Activated CD4-positive, alpha-beta T cell treated with anti-CD3 and anti-CD28 coated beads for 36 hours (primary cell): ENCODE measurements at regions of chr9 and their contacts with region 1.

Region 1: DNA sequence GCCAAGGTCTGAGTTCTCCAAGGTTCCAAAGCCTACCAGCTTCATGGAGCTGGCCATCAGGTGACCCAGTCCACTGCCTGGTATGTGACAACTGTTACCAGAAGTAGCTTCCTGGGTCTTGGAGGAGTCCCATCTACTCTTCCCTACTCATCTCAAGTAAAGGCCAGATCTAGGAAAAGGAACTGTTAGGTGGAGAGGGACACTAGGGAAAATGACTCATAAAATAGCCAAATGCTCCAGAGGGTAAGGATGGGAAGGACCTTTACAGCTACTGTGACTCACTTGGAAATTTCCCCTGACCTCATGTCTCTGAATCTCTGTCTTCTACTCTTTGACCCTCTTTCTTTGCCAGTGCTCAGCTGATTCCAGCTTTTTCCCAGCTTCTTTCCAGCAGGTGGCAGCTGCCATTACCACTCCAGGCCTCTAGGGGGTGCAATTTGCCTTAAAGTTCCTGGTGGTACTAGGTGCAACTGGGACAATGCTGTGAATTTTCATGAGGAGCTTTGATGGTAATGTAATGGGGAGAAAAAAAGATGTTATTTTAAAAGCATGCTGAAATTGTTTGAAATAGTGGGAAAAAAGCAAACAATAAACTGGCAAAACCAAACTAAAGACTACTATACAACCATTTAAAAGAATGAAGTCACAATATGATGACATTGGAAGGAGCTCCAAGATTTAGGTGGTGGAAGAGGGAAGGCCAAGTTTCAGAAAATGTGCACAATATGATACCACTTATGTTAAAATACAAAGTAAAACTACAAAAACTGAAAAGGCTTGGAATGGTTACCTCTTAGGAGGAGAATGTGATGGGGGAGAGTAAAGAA is 27.1 kb upstream of the MYORG start:
- DNase-seq: peak; percentile 76
- ATAC-seq: peak; percentile 16
- H3K4me3 Mint-ChIP-seq: no peak overlapping the region
- H3K27ac Mint-ChIP-seq: no peak overlapping the region
- H3K4me1 Mint-ChIP-seq: no peaks in the 10 kb centered on the region
- H3K27me3 Mint-ChIP-seq: no peaks in the 10 kb centered on the region

Region 2: DNA sequence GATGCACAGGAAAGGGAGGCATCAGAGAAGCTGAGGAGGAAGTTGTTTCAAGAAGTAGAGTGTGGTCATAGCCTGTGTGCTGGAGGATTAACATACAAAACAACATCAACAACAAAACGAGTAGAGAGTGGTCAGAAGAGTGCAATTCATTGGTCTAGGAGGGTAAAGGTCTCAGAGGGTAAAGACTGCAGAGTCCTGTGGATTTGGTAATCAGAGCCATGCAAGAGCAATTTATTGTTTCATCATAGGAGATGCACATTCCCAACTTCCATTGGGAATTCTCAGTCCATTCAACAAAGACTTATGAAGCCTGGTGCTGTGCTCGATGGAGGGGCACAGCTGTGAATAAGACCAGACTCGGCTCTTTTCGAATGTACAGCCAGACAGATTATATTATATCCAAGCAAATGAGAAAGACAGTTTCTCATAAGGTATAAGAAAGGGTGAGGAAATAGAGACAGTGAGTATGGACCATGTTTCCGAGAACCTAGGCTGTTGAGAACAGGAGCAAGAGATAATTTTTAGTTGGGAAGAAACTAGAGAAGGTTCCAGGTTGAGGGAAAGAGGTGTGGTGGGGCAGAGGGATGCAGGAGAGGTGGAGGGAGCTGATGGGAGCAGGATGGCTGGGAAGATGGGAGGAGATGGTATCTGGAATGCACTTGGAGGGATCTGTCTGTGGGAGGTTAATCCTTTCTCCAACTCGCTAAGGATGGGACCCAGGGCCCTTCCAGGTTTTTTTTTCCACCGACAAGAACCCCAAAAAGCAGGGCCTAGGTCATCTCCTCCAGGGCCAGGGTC is 19.2 kb before region 1 on chr9:
- CTCF ChIA-PET with region 1: interaction called, 17 read pairs
- POLR2A ChIA-PET with region 1: no interaction called
- intact Hi-C with region 1: no loop called
- DNase-seq: no peak
- ATAC-seq: no peak
- H3K4me3 Mint-ChIP-seq: no peak overlapping the region
- H3K27ac Mint-ChIP-seq: no peak overlapping the region
- H3K4me1 Mint-ChIP-seq: peaks cover 18% of the 10 kb centered on the region
- H3K27me3 Mint-ChIP-seq: no peaks in the 10 kb centered on the region

Region 3: GRCh38 chr9:34419716-34420504 is 16.1 kb after region 1 on chr9:
- CTCF ChIA-PET with region 1: interaction called, 26 read pairs
- POLR2A ChIA-PET with region 1: no interaction called
- intact Hi-C with region 1: no loop called
- DNase-seq: no peak
- ATAC-seq: no peak
- H3K4me3 Mint-ChIP-seq: no peak overlapping the region
- H3K27ac Mint-ChIP-seq: no peak overlapping the region
- H3K4me1 Mint-ChIP-seq: no peaks in the 10 kb centered on the region
- H3K27me3 Mint-ChIP-seq: no peaks in the 10 kb centered on the region

Region 4: GRCh38 chr9:34493972-34494535 is 90.3 kb after region 1 on chr9:
- CTCF ChIA-PET with region 1: interaction called, 11 read pairs
- POLR2A ChIA-PET with region 1: no interaction called
- intact Hi-C with region 1: no loop called
- DNase-seq: peak; percentile 62
- ATAC-seq: no peak
- H3K4me3 Mint-ChIP-seq: no peak overlapping the region
- H3K27ac Mint-ChIP-seq: no peak overlapping the region
- H3K4me1 Mint-ChIP-seq: no peaks in the 10 kb centered on the region
- H3K27me3 Mint-ChIP-seq: peaks cover 20% of the 10 kb centered on the region

Region 5: DNA sequence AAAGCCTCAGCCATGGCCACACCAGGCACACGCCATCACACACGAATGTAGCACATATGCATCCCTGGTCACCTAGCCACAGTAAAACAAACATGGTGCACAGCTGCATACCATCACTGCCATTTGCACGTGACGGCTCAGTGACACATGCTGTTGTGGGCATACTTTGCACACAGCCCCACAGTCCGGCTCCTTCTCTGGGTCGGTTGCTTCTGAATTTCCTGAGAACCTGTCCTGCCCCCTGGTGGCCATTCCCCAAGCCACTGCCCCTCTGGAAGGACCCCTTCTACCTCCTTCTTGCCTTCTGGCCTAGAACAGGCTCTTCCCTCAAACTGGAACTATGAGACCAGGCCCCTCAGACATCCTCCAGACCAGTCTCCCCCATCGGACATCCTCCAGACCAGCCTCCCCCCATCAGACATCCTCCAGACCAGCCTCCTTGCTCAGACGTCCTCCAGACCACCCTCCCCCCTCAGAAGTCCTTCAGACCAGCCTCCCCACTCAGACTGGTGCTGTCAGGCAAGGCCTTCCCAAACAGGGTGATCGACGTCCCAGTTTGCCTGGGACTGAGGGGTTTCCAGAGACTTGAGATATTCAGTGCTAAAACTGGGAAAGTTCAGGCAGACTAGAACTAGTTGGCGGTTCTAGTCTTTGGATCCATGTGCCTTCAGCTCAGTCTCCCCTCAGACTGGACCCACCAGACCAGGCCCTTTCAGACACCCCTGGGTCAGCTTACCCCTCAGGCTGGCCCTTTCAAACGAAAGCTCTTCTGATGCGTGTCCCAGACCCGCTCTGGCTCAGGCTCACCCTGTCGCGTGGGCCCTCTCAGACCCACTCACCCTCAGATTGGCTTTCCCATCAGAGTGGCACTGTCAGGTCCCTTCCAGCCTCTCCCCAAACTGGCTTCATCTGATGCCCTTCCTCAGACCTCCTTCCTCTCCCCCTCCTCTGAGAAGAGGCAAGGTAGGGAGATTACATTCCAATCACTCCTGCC is 143.4 kb after region 1 on chr9:
- CTCF ChIA-PET with region 1: interaction called, 17 read pairs
- POLR2A ChIA-PET with region 1: no interaction called
- intact Hi-C with region 1: loop called in 1 of 2 experiments (anchors 1 kb)
- DNase-seq: peak; percentile 84
- ATAC-seq: peak; percentile 84
- H3K4me3 Mint-ChIP-seq: no peak overlapping the region
- H3K27ac Mint-ChIP-seq: no peak overlapping the region
- H3K4me1 Mint-ChIP-seq: no peaks in the 10 kb centered on the region
- H3K27me3 Mint-ChIP-seq: peaks cover 7% of the 10 kb centered on the region

Region 6: GRCh38 chr9:34603610-34604231 is 200.0 kb after region 1 on chr9:
- CTCF ChIA-PET with region 1: interaction called, 9 read pairs
- POLR2A ChIA-PET with region 1: no interaction called
- intact Hi-C with region 1: loop called in 1 of 2 experiments (anchors 1 kb)
- DNase-seq: peak; percentile 87
- ATAC-seq: peak; percentile 95
- H3K4me3 Mint-ChIP-seq: no peak overlapping the region
- H3K27ac Mint-ChIP-seq: no peak overlapping the region
- H3K4me1 Mint-ChIP-seq: no peaks in the 10 kb centered on the region
- H3K27me3 Mint-ChIP-seq: peaks cover 2% of the 10 kb centered on the region